ENCODE measurements at regions of chr21 and their contacts with region 1.

Region 1: GRCh38 chr21:23853796-23854379 is 1753.4 kb downstream of the MRPL39 start:
- DNase-seq: peak in 1 of 2 donors; percentile 71
- ATAC-seq: peak; percentile 54 to 70 (median 55)
- H3K4me3 ChIP-seq: no peak overlapping the region
- H3K4me3 Mint-ChIP-seq: no peak overlapping the region
- H3K27ac ChIP-seq: no peak overlapping the region
- H3K27ac Mint-ChIP-seq: no peak overlapping the region
- H3K4me1 ChIP-seq: no peaks in the 10 kb centered on the region
- H3K4me1 Mint-ChIP-seq: peaks cover 6 to 15% of the 10 kb centered on the region in 2 donors
- H3K27me3 ChIP-seq: no peaks in the 10 kb centered on the region
- H3K27me3 Mint-ChIP-seq: no peaks in the 10 kb centered on the region
- CTCF ChIP-seq: peak; percentile 67

Region 2: GRCh38 chr21:23874271-23874670 is 20.4 kb after region 1 on chr21:
- intact Hi-C with region 1: no loop called
- DNase-seq: no peak
- ATAC-seq: no peak
- H3K4me3 ChIP-seq: no peak overlapping the region
- H3K4me3 Mint-ChIP-seq: no peak overlapping the region
- H3K27ac ChIP-seq: no peak overlapping the region
- H3K27ac Mint-ChIP-seq: no peak overlapping the region
- H3K4me1 ChIP-seq: no peaks in the 10 kb centered on the region
- H3K4me1 Mint-ChIP-seq: no peaks in the 10 kb centered on the region
- H3K27me3 ChIP-seq: no peaks in the 10 kb centered on the region
- H3K27me3 Mint-ChIP-seq: no peaks in the 10 kb centered on the region
- CTCF ChIP-seq: no peak

Region 3: DNA sequence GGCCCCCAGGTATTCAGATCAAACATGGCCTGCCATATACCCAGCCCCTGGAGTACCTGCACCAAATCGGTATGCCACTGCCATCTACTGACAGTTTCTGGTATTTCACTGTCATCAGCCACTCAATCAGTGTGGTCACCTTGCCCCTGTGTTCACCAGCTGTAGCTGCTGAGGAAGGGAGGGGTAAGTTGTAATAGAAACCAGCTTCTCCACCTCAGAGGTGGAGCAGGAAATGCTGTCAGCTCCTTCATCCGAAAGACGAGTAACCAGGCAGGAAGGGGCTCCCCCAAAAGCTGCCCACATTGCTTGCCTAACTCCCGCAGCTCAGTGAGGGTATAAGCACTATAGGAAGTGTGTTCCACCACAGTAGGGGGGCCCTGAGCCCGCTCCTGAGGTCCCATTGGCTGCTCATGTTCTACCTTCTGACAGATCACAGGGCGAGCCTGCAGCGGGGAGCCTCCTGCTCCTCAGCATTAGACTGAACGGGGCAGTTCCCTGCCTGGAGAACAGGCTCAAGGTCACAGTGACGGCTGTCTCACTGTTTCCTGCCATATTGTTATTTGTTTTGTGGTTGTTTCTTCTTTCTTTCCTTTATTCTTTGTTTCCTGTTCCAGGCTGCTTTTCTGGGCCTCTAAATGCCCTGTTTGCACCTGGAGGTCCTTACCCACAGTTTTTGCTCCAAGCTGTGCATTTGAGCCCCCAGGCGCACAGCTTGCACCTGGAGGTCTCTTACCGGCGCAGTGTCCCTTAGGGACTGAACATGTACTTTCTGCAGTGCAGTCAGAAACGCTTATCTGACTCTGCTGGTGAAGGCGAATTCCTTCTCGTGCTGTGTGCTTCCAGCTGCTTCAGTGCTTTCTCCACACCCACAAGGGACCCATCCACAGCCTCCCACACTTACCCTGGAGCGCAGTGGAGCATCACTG is 115.1 kb after region 1 on chr21:
- intact Hi-C with region 1: loop called (anchors 1 kb)
- DNase-seq: peak; percentile 46 to 90
- ATAC-seq: peak; percentile 87 to 94 (median 90)
- H3K4me3 ChIP-seq: no peak overlapping the region
- H3K4me3 Mint-ChIP-seq: peak overlapping the region; percentile 74
- H3K27ac ChIP-seq: peak overlapping the region; percentile 47
- H3K27ac Mint-ChIP-seq: peak overlapping the region; percentile 25 to 74
- H3K4me1 ChIP-seq: peaks cover 20% of the 10 kb centered on the region
- H3K4me1 Mint-ChIP-seq: peaks cover 14% of the 10 kb centered on the region in 2 donors
- H3K27me3 ChIP-seq: no peaks in the 10 kb centered on the region
- H3K27me3 Mint-ChIP-seq: peaks cover 0 to 1% of the 10 kb centered on the region in 2 donors
- CTCF ChIP-seq: peak; percentile 67

Region 4: GRCh38 chr21:24055696-24056095 is 201.8 kb after region 1 on chr21:
- intact Hi-C with region 1: no loop called
- DNase-seq: no peak
- ATAC-seq: no peak
- H3K4me3 ChIP-seq: no peak overlapping the region
- H3K4me3 Mint-ChIP-seq: no peak overlapping the region
- H3K27ac ChIP-seq: no peak overlapping the region
- H3K27ac Mint-ChIP-seq: no peak overlapping the region
- H3K4me1 ChIP-seq: no peaks in the 10 kb centered on the region
- H3K4me1 Mint-ChIP-seq: no peaks in the 10 kb centered on the region
- H3K27me3 ChIP-seq: no peaks in the 10 kb centered on the region
- H3K27me3 Mint-ChIP-seq: no peaks in the 10 kb centered on the region
- CTCF ChIP-seq: no peak

Region 5: GRCh38 chr21:24514081-24514733 is 660.3 kb after region 1 on chr21:
- intact Hi-C with region 1: loop called (anchors 5 kb)
- DNase-seq: peak in 1 of 2 donors; percentile 12
- ATAC-seq: no peak
- H3K4me3 ChIP-seq: no peak overlapping the region
- H3K4me3 Mint-ChIP-seq: no peak overlapping the region
- H3K27ac ChIP-seq: no peak overlapping the region
- H3K27ac Mint-ChIP-seq: no peak overlapping the region
- H3K4me1 ChIP-seq: no peaks in the 10 kb centered on the region
- H3K4me1 Mint-ChIP-seq: no peaks in the 10 kb centered on the region
- H3K27me3 ChIP-seq: no peaks in the 10 kb centered on the region
- H3K27me3 Mint-ChIP-seq: no peaks in the 10 kb centered on the region
- CTCF ChIP-seq: peak; percentile 62

Region 6: GRCh38 chr21:25385911-25386474 is 1532.1 kb after region 1 on chr21:
- intact Hi-C with region 1: loop called (anchors 2 kb)
- DNase-seq: peak in 1 of 2 donors; percentile 70
- ATAC-seq: peak in 1 of 3 donors; percentile 57
- H3K4me3 ChIP-seq: no peak overlapping the region
- H3K4me3 Mint-ChIP-seq: no peak overlapping the region
- H3K27ac ChIP-seq: no peak overlapping the region
- H3K27ac Mint-ChIP-seq: no peak overlapping the region
- H3K4me1 ChIP-seq: no peaks in the 10 kb centered on the region
- H3K4me1 Mint-ChIP-seq: no peaks in the 10 kb centered on the region
- H3K27me3 ChIP-seq: no peaks in the 10 kb centered on the region
- H3K27me3 Mint-ChIP-seq: peaks cover 0 to 6% of the 10 kb centered on the region in 2 donors
- CTCF ChIP-seq: peak; percentile 92